ENCODE measurements at regions of chr22 and their contacts with region 1.

Region 1: GRCh38 chr22:40856513-40857308 is at the starts of genes ST13 and XPNPEP3:
- DNase-seq: peak; percentile 99
- H3K4me3 ChIP-seq: peak within 1 kb of the TSS; percentile 78 to 96 (median 84)
- H3K27ac ChIP-seq: peak within 1 kb of the TSS; percentile 93 to 99 (median 96)
- H3K4me1 ChIP-seq: peaks cover 0 to 53% (median 53%) of the 10 kb centered on the region in 4 donors
- H3K27me3 ChIP-seq: no peaks in the 10 kb centered on the region
- CTCF ChIP-seq: no peak
- EP300 ChIP-seq: peak in 1 of 4 donors; percentile 78
- POLR2A ChIP-seq: peak; percentile 69 to 74
- total RNA-seq, gene ST13: 171 to 213 (median 198) TPM
- total RNA-seq, gene XPNPEP3: 9.6 to 13.6 (median 11.9) TPM

Region 2: GRCh38 chr22:40818747-40819598 is 37.7 kb before region 1 on chr22 and contains the start of gene SLC25A17:
- intact Hi-C with region 1: loop called (anchors 5 kb)
- DNase-seq: peak; percentile 94
- H3K4me3 ChIP-seq: peak within 1 kb of the TSS; percentile 79 to 88 (median 86)
- H3K27ac ChIP-seq: peak within 1 kb of the TSS; percentile 78 to 82 (median 82)
- H3K4me1 ChIP-seq: peaks cover 0 to 29% (median 26%) of the 10 kb centered on the region in 4 donors
- H3K27me3 ChIP-seq: no peaks in the 10 kb centered on the region
- CTCF ChIP-seq: peak; percentile 33 to 53 (median 44)
- EP300 ChIP-seq: no peak
- POLR2A ChIP-seq: peak in 1 of 2 donors; percentile 50
- total RNA-seq, gene SLC25A17: 10.2 to 14.7 (median 11.1) TPM

Region 3: DNA sequence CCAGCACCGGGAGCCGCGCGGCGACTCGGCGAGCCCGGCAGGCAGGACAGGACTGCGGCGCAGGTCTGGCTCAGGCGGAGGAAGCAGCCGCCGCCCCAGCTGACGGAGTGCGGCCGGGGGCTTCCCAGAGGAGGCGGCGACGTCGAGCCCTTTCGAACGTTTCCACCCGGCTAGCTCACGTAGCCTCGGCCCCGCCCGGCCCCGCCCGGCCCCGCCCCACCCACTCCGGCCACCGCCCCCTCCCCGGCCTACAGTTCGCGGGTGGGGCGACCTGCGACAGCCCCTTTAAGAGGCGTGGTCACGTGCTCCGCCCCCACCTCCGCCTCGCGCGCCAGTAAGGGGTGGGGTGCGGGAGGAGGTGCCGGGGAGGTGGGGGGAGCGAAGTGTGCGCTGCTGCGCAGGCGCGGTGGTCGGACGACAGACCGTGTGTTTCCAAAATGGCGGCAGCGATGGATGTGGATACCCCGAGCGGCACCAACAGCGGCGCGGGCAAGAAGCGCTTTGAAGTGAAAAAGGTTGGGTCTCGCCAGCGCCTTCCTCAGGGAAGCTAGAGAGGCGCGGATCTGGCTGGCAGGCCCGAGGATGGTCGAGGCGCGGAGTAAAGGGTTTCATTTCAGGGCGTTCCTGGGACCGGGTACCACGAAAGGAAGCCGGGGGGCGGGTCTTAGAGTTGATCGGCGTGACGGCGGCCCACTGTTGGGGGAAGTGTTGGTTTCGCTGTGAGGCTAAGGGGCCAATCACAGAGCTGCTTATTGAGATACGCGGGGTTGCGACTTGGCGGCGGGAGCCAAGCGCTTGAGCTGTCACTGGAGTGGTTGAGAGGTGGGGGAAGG is 94.5 kb after region 1 on chr22 and contains the start of gene RBX1:
- intact Hi-C with region 1: loop called (anchors 2 kb)
- DNase-seq: peak; percentile 99
- H3K4me3 ChIP-seq: peak within 1 kb of the TSS; percentile 72 to 86 (median 80)
- H3K27ac ChIP-seq: peak within 1 kb of the TSS; percentile 96 to 98 (median 97)
- H3K4me1 ChIP-seq: peaks cover 0 to 38% (median 23%) of the 10 kb centered on the region in 4 donors
- H3K27me3 ChIP-seq: no peaks in the 10 kb centered on the region
- CTCF ChIP-seq: no peak
- EP300 ChIP-seq: peak in 1 of 4 donors; percentile 79
- POLR2A ChIP-seq: peak; percentile 25 to 39
- total RNA-seq, gene RBX1: 32.4 to 72.8 (median 51.2) TPM

Region 4: DNA sequence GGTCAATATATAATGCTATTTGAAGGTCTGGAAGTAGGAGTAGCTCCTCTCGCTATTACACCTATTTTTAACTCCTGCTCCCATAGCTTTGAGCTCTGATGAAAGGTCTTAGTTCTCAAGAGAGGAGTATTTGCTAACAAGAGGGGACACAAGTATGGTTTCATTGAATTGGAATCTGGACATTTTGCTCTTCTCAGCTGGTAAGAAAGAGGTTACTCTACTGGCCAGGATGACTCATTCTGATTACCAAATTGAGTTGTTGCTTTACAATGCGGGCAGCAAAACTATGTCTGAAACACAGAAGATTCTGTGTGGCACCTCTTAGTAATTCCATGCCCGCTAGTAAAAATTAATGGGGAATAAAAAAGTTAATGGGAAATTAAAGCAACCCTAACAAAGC is 172.1 kb after region 1 on chr22:
- intact Hi-C with region 1: no loop called
- DNase-seq: no peak
- H3K4me3 ChIP-seq: no peak overlapping the region
- H3K27ac ChIP-seq: peak overlapping the region; percentile 22 to 29 (median 26)
- H3K4me1 ChIP-seq: no peaks in the 10 kb centered on the region
- H3K27me3 ChIP-seq: no peaks in the 10 kb centered on the region
- CTCF ChIP-seq: no peak
- EP300 ChIP-seq: no peak
- POLR2A ChIP-seq: no peak

Region 5: GRCh38 chr22:41621099-41621910 is 764.6 kb after region 1 on chr22 and contains the start of gene XRCC6:
- intact Hi-C with region 1: loop called (anchors 10 kb)
- DNase-seq: peak; percentile 100
- H3K4me3 ChIP-seq: peak within 1 kb of the TSS; percentile 74 to 95 (median 86)
- H3K27ac ChIP-seq: peak within 1 kb of the TSS; percentile 95 to 99 (median 98)
- H3K4me1 ChIP-seq: peaks cover 0 to 37% (median 31%) of the 10 kb centered on the region in 4 donors
- H3K27me3 ChIP-seq: no peaks in the 10 kb centered on the region
- CTCF ChIP-seq: no peak
- EP300 ChIP-seq: peak in 2 of 4 donors; percentile 59 to 84
- POLR2A ChIP-seq: peak; percentile 89 to 96
- total RNA-seq, gene XRCC6: 143 to 220 (median 202) TPM